ENCODE measurements at regions of chr19 and their contacts with region 1.

Region 1: DNA sequence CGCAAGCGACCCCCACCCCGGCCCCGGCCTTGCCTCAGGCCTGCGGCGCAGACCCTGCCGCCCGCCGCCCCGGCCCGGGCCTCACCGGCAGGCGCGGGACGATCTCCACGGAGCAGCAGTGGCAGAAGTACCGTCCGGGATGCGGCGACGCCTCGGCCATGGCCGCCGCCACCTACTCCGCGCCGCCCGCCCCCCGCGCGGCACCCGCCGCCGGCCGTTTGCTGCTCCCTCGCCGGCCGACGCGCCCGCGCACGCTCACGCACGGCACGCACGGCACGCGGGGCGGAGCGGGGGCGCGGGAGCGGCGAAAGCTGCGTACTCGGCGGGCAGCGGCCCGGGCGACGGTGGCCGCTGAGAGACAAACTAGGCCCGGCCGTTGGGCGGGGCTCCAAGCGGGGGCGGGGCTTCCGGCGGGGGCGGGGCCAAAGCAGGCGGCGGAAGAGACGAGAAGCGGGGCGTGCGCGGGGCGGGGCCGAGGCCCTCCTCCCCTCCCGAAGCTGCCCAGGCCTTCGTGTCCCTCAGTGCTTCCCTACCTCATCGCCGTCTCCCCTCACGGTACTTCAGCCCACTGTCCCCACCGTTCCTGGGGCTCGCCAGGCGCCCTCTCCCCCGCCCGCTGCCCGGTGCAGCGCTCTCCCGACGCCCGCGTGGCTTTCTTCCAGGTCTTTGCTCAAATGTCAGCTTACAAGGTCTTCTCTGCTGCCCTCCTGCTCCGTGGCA is at the start of gene RNF126:
- DNase-seq: peak; percentile 95
- H3K4me3 Mint-ChIP-seq: peak within 1 kb of the TSS; percentile 99
- H3K27ac Mint-ChIP-seq: peak within 1 kb of the TSS; percentile 98
- H3K4me1 Mint-ChIP-seq: peaks cover 40% of the 10 kb centered on the region
- H3K27me3 Mint-ChIP-seq: no peaks in the 10 kb centered on the region
- total RNA-seq, gene RNF126: 99.5 to 108 TPM

Region 2: DNA sequence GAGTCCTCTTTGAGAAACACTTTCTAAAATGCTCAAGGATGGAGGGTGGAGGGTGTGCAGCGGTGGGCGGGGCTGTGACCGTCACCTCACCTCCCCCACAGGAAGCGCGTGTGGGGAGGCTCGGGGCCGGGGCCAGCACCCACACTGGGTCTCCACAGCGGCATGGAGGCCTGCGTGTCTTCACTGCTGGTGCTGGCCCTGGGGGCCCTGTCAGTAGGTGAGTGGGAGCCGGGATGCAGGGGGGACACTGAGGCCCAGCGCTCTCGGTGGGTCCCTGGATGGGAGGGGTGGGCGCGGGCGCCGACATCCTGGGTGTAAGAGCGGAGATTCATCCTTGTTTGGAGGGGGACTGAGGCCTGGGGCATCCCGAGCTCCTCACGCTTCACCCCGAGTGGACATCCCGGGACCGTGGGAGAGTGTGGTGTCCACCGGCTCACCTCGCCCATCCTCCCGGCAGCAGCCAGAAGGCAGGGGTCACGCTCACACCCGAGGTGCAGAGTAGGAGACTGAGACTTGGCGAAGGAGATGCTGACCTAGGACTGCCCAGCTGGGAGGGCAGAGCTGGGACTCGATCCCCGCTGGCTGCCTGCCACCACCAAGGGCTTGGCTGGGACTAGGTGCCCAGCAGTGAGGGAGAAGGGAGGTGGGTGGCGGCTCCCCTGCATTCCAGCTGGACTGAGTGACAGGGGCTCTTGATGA is 119.1 kb before region 1 on chr19 and contains the start of gene GZMM:
- CTCF ChIA-PET with region 1: no interaction called
- intact Hi-C with region 1: no loop called
- DNase-seq: peak; percentile 83
- H3K4me3 Mint-ChIP-seq: peak within 1 kb of the TSS; percentile 78
- H3K27ac Mint-ChIP-seq: peak within 1 kb of the TSS; percentile 81
- H3K4me1 Mint-ChIP-seq: peaks cover 23% of the 10 kb centered on the region
- H3K27me3 Mint-ChIP-seq: no peaks in the 10 kb centered on the region
- total RNA-seq, gene GZMM: 20.7 TPM

Region 3: DNA sequence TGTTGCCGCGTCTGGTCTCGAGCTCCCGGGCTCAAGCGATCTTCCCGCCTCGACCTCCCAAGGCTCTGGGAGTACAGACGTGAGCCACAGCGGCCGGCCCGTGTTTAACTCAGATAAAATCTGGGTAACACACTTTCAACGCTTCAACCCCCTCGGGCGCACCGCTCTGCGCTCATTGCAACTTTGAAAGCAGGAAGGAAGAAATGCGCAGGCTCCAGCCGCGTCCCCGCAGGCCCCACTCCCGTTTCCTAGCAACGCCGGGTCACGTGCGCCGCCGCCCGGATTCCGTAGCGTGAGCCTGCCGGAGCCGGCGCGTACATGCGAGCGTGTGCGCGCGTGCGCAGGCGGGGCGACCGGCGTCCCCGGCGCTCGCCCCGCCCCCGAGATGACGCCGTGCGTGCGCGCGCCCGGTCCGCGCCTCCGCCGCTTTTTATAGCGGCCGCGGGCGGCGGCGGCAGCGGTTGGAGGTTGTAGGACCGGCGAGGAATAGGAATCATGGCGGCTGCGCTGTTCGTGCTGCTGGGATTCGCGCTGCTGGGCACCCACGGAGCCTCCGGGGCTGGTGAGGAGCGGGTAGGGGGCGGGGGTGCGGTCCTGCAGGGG is 90.9 kb before region 1 on chr19 and contains the start of gene BSG:
- CTCF ChIA-PET with region 1: interaction called, 3 read pairs
- intact Hi-C with region 1: loop called (anchors 1 kb)
- DNase-seq: peak; percentile 99
- H3K4me3 Mint-ChIP-seq: peak within 1 kb of the TSS; percentile 90
- H3K27ac Mint-ChIP-seq: peak within 1 kb of the TSS; percentile 98
- H3K4me1 Mint-ChIP-seq: peaks cover 36% of the 10 kb centered on the region
- H3K27me3 Mint-ChIP-seq: no peaks in the 10 kb centered on the region
- total RNA-seq, gene BSG: 160 to 161 TPM

Region 4: DNA sequence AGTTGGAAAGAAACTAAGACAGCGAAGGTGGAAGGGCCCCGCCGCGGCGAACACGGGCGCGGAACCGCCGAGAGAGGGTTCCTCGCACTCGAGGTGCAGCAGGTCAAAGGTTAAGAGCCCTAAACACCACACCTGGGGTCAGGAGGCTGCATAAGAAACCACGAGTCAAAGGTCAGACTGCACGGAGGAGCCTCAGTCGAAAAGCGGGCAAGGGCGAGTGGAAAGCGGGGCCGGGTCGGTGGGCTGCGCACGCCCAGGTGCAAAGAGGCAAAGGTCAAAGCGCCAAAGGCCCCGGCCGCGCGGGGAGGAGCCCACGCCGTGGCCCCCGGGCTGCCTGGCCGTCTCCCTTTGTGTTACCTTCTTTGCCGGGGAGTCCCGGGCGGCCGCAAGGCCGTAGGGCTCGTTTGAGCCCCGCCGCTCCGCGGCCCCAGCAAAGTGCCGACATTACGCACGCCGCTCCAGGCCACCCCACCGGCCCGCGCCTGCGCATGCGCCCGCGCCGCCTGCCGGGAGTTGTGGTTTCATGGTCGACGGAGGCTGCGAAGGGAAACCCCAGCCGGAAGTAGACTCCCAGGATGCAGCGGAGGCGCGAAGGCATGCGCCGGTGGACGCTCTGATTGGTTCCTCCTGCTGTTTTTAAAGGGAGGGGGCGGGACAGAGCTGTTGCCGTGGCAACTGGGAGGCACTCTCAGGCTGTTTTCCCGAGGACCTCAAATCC is 29.9 kb before region 1 on chr19 and contains the start of gene POLRMT:
- CTCF ChIA-PET with region 1: no interaction called
- intact Hi-C with region 1: loop called (anchors 1 kb)
- DNase-seq: peak; percentile 98
- H3K4me3 Mint-ChIP-seq: peak within 1 kb of the TSS; percentile 93
- H3K27ac Mint-ChIP-seq: peak within 1 kb of the TSS; percentile 78
- H3K4me1 Mint-ChIP-seq: peaks cover 37% of the 10 kb centered on the region
- H3K27me3 Mint-ChIP-seq: no peaks in the 10 kb centered on the region
- total RNA-seq, gene POLRMT: 63.8 to 65.6 TPM

Region 5: DNA sequence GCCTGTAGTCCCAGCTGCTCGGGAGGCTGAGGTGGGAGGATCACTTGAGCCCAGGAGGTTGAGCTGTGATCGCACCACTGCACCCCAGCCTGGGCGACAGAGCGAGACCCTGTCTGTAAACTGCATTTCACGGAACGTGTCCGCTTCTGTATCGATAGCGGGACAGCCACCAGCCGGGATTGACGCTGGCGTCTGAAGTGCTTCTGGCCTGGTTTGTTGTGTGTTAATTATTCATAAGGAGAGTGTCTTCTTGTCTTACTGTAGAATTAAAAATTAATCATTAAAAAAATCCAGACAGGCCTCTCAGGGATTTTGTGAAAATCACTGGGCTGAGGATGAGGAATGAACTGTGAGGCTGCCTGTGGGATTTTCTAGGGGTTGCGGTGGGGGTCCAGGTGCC is 71.6 kb after region 1 on chr19:
- CTCF ChIA-PET with region 1: interaction called, 8 read pairs
- intact Hi-C with region 1: loop called (anchors 1 kb)
- DNase-seq: no peak
- H3K4me3 Mint-ChIP-seq: no peak overlapping the region
- H3K27ac Mint-ChIP-seq: no peak overlapping the region
- H3K4me1 Mint-ChIP-seq: peaks cover 6% of the 10 kb centered on the region
- H3K27me3 Mint-ChIP-seq: peaks cover 3% of the 10 kb centered on the region

Region 6: GRCh38 chr19:925526-926322 is 262.6 kb after region 1 on chr19 and contains the start of gene ARID3A:
- CTCF ChIA-PET with region 1: no interaction called
- intact Hi-C with region 1: loop called (anchors 5 kb)
- DNase-seq: peak; percentile 76
- H3K4me3 Mint-ChIP-seq: peak within 1 kb of the TSS; percentile 73
- H3K27ac Mint-ChIP-seq: peak within 1 kb of the TSS; percentile 56
- H3K4me1 Mint-ChIP-seq: peaks cover 13% of the 10 kb centered on the region
- H3K27me3 Mint-ChIP-seq: no peaks in the 10 kb centered on the region
- total RNA-seq, gene ARID3A: 23.1 to 28.4 TPM

Region 7: DNA sequence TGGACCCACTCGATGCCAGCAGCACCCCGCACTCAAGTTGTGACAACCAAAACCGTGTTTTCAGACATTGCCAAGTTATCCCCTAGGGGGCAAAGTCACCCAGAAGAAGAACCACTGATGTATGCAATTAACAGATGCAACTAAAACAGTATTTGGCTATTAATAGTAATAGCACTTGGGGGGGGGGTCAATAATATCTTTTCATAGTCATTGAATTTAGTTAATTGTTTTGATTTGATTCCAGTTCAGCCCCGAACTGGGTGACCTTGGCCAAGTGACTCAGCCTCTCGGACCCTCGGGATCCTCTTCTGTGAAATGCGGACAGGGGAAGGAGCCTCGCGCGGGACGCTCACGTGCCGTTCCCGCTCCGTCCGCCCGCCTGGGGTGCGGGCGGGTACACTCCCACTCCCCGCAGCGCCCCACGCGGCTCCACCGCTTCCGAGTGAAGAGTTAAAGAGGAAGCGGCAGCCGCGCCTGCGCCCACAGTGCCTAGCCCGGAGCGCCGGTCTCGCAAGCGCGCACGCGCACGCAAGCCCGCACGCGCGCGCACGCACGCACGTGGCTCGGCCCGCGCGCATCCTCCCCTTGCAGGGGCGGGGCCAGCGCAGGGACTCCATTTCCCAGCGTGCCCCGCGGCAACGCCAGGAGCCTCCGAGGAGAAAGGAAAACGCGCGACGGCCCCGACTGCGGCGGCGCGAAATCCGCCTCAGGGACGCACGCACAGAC is 743.8 kb after region 1 on chr19:
- CTCF ChIA-PET with region 1: no interaction called
- intact Hi-C with region 1: loop called (anchors 5 kb)
- DNase-seq: peak; percentile 98
- H3K4me3 Mint-ChIP-seq: peak overlapping the region; percentile 69
- H3K27ac Mint-ChIP-seq: peak overlapping the region; percentile 81
- H3K4me1 Mint-ChIP-seq: peaks cover 43% of the 10 kb centered on the region
- H3K27me3 Mint-ChIP-seq: peaks cover 5% of the 10 kb centered on the region